ENCODE measurements at regions of chr17 and their contacts with region 1.

Region 1: GRCh38 chr17:78250891-78251794 is 19.7 kb downstream of the TMEM235 start:
- DNase-seq: peak; percentile 99
- H3K4me3 ChIP-seq: peak overlapping the region; percentile 10 to 40; a peak in 2 of 4 replicates
- H3K27ac ChIP-seq: peak overlapping the region in 1 of 2 experiments; percentile 82; a peak in 2 of 4 replicates
- H3K4me1 ChIP-seq: peaks cover 0 to 63% of the 10 kb centered on the region in 2 experiments; a peak in 1 of 4 replicates
- H3K27me3 ChIP-seq: no peaks in the 10 kb centered on the region
- CTCF ChIP-seq: peak; percentile 100
- EP300 ChIP-seq: no peak
- RAD21 ChIP-seq: peak; percentile 99

Region 2: DNA sequence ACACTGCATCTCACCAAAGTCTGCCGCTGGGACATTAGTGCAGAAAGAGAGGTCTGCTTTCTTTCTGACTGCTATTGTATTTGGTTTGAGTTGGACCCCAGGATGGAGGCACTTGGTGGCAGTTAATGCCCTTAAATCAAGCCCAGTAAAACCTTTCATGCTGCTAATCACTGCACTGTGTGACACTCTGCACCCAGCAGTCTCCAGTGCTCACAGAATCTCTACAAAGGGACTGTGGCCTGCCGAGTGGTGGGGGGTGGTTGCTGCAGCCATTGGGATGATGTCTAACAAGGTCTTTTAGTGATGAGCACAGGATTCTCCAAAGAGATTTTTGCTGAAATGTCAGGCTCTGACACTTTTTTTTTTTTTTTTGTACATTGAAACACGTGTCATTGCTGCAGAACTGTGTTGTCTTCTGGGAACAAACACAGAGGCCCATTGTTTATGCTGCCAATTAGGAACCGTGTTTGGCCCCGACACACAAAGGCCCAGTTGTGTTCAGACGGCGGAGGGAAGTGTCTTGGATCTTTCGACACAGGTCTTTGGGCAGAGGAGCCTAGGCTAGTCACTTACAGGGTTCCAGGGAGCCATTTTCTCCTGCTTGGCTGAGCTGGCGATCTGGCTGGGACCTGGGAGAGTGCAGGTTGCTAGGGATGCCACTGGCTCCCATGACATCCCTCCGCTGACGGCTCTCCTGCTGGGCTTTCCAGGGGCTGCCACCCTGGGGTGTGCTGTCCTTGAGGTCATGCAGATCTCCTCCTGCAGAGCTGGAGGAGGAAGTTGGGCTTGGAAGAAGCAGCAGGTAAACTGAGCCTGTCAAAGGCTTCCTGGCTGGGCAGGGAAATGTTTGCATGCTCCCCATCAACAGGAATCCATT is 308.8 kb before region 1 on chr17:
- CTCF ChIA-PET with region 1: no interaction called
- POLR2A ChIA-PET with region 1: no interaction called
- DNase-seq: no peak
- H3K4me3 ChIP-seq: no peak overlapping the region
- H3K27ac ChIP-seq: no peak overlapping the region
- H3K4me1 ChIP-seq: no peaks in the 10 kb centered on the region
- H3K27me3 ChIP-seq: peaks cover 42% of the 10 kb centered on the region; the same call in 1 of the 2 replicates
- CTCF ChIP-seq: no peak
- EP300 ChIP-seq: no peak
- RAD21 ChIP-seq: no peak

Region 3: DNA sequence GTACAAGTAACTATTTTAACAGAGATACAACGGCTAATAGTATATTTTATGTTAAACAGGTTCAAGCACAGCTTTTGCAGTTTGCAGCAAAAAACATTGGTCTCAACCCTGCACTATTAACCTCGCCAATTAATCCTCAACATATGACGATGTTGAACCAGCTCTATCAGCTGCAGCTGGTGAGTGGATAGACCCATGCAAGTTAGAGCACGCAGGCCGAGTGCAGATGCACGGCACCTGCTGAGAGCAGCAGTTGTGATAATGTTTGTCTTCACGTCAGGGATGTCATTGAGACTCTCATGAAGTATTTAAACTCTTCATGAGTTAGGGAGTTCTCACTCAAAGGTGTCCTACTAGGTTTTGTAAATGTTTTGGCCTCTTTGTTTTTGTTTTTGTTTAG is 168.2 kb before region 1 on chr17:
- CTCF ChIA-PET with region 1: interaction called, 11 read pairs
- POLR2A ChIA-PET with region 1: no interaction called
- DNase-seq: no peak
- H3K4me3 ChIP-seq: no peak overlapping the region
- H3K27ac ChIP-seq: no peak overlapping the region
- H3K4me1 ChIP-seq: no peaks in the 10 kb centered on the region
- H3K27me3 ChIP-seq: no peaks in the 10 kb centered on the region
- CTCF ChIP-seq: no peak
- EP300 ChIP-seq: no peak
- RAD21 ChIP-seq: no peak

Region 4: GRCh38 chr17:78133971-78134898 is 116.9 kb before region 1 on chr17:
- CTCF ChIA-PET with region 1: interaction called, 15 read pairs
- POLR2A ChIA-PET with region 1: no interaction called
- DNase-seq: peak; percentile 84
- H3K4me3 ChIP-seq: no peak overlapping the region
- H3K27ac ChIP-seq: no peak overlapping the region
- H3K4me1 ChIP-seq: no peaks in the 10 kb centered on the region; a peak in 1 of 4 replicates
- H3K27me3 ChIP-seq: peaks cover 3% of the 10 kb centered on the region
- CTCF ChIP-seq: peak; percentile 66
- EP300 ChIP-seq: no peak
- RAD21 ChIP-seq: peak; percentile 63

Region 5: DNA sequence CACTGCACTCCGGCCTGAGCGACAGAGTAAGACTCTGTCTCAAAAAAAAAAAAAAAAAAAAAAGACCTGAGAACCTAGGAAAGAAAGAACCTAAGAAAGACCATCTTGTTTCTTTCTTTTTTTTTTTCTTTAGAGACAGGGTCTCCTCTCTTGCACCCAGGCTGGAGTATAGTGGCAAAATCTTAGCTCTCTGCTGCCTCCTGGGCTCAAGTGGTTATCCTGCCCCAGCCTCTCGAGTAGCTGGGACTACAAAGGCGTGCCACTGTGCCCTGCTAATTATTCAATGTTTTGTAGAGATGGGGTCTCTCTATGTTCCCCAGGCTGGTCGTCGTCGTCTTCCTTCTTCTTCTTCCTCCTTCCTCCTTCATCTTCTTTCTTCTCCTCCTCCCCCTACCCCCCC is 44.8 kb before region 1 on chr17:
- CTCF ChIA-PET with region 1: interaction called, 22 read pairs
- POLR2A ChIA-PET with region 1: no interaction called
- DNase-seq: no peak
- H3K4me3 ChIP-seq: no peak overlapping the region
- H3K27ac ChIP-seq: no peak overlapping the region
- H3K4me1 ChIP-seq: no peaks in the 10 kb centered on the region; a peak in 1 of 4 replicates
- H3K27me3 ChIP-seq: no peaks in the 10 kb centered on the region
- CTCF ChIP-seq: peak; percentile 16; the same call in 1 of the 2 replicates
- EP300 ChIP-seq: no peak
- RAD21 ChIP-seq: no peak

Region 6: DNA sequence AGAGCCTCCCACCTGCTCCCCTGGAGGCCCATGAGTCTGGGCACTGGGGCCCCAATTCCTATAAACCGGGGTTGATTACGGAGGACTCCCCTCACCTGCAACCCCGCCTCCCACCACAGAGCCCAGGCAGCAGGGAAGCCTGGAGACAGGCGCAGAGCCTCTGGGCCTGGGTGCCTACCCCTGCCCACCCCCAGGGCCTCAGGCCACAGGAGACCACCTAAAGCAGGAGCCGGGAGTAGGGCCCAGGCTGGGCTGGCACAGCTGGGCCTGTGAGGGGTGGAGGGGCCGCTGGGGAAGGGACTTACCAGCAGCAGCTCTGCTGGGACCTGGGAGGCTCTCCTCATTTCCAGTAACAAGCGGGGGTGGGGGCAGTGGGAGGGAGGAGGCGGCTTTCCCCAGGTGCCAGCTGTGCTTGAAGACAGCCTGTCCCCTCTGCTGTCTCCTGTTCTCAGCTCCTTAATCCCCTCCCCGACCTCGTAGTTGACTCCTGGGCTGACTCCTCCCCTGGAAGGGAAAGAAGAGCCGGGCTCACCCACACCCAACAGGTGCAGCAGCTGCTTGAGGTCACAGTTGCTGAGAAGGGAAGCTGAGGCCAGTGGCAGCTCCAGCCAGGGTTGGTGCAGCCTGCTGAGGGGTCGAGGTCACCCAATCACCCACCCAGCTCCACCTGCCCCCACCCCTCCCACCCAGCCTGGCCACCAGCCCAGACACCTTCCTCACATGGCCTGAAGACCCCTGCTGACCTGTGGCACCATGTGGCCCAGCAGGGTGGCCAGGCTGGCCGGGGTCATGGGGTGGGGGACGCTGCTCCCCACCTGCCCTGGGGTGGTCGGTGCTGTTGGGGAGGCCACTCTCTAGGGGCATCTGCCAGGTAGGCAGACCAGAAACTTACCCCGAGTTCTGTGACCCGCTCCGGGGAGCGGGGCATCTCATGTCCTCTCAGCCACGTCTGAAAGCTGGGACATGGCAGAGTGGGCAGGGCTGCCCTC is 27.3 kb after region 1 on chr17:
- CTCF ChIA-PET with region 1: interaction called, 46 read pairs
- POLR2A ChIA-PET with region 1: no interaction called
- DNase-seq: no peak
- H3K4me3 ChIP-seq: no peak overlapping the region
- H3K27ac ChIP-seq: peak overlapping the region in 1 of 2 experiments; percentile 45; a peak in 1 of 4 replicates
- H3K4me1 ChIP-seq: peaks cover 0 to 21% of the 10 kb centered on the region in 2 experiments; a peak in 1 of 4 replicates
- H3K27me3 ChIP-seq: peaks cover 7% of the 10 kb centered on the region
- CTCF ChIP-seq: no peak
- EP300 ChIP-seq: no peak
- RAD21 ChIP-seq: no peak

Region 7: GRCh38 chr17:78360371-78361224 is 109.5 kb after region 1 on chr17:
- CTCF ChIA-PET with region 1: interaction called, 55 read pairs
- POLR2A ChIA-PET with region 1: interaction called, 3 read pairs
- DNase-seq: peak; percentile 97
- H3K4me3 ChIP-seq: peak overlapping the region; percentile 70 to 94
- H3K27ac ChIP-seq: peak overlapping the region; percentile 91
- H3K4me1 ChIP-seq: peaks cover 18 to 43% of the 10 kb centered on the region in 2 experiments
- H3K27me3 ChIP-seq: no peaks in the 10 kb centered on the region
- CTCF ChIP-seq: peak; percentile 99
- EP300 ChIP-seq: peak in 1 of 2 experiments; percentile 6; a peak in 1 of 4 replicates
- RAD21 ChIP-seq: peak; percentile 81

Region 8: GRCh38 chr17:78421484-78422266 is 170.5 kb after region 1 on chr17:
- CTCF ChIA-PET with region 1: interaction called, 112 read pairs
- POLR2A ChIA-PET with region 1: no interaction called
- DNase-seq: peak; percentile 98
- H3K4me3 ChIP-seq: no peak overlapping the region; a peak in 1 of 4 replicates
- H3K27ac ChIP-seq: no peak overlapping the region
- H3K4me1 ChIP-seq: no peaks in the 10 kb centered on the region
- H3K27me3 ChIP-seq: no peaks in the 10 kb centered on the region
- CTCF ChIP-seq: peak; percentile 100
- EP300 ChIP-seq: no peak
- RAD21 ChIP-seq: peak; percentile 99